Mammary epithelial cell (primary cell): ENCODE measurements at regions of chr17 and their contacts with region 1.

Region 1: GRCh38 chr17:35224436-35224835 is 18.4 kb upstream of the SLFN5 start:
- DNase-seq: no peak
- H3K4me3 ChIP-seq: no peak overlapping the region
- H3K27ac ChIP-seq: no peak overlapping the region
- H3K4me1 ChIP-seq: no peaks in the 10 kb centered on the region
- H3K27me3 ChIP-seq: no peaks in the 10 kb centered on the region
- CTCF ChIP-seq: no peak

Region 2: GRCh38 chr17:35189291-35189690 is 35.1 kb before region 1 on chr17:
- CTCF ChIA-PET with region 1: no interaction called
- dilution Hi-C with region 1: no loop called
- in situ Hi-C with region 1: no loop called
- intact Hi-C with region 1: loop called (anchors 5 kb)
- DNase-seq: peak; percentile 52
- H3K4me3 ChIP-seq: no peak overlapping the region
- H3K27ac ChIP-seq: no peak overlapping the region
- H3K4me1 ChIP-seq: peaks cover 19% of the 10 kb centered on the region
- H3K27me3 ChIP-seq: no peaks in the 10 kb centered on the region
- CTCF ChIP-seq: no peak